Mammary epithelial cell (primary cell): ENCODE measurements at regions of chr13 and their contacts with region 1.

Region 1: GRCh38 chr13:81058916-81059290 is 718.0 kb upstream of the SPRY2 start:
- DNase-seq: peak; percentile 66
- H3K4me3 ChIP-seq: no peak overlapping the region
- H3K27ac ChIP-seq: peak overlapping the region; percentile 70
- H3K4me1 ChIP-seq: peaks cover 26% of the 10 kb centered on the region
- H3K27me3 ChIP-seq: no peaks in the 10 kb centered on the region
- CTCF ChIP-seq: no peak

Region 2: GRCh38 chr13:81480634-81481033 is 421.7 kb after region 1 on chr13:
- CTCF ChIA-PET with region 1: no interaction called
- dilution Hi-C with region 1: no loop called
- in situ Hi-C with region 1: loop called in 1 of 2 experiments (anchors 25 kb)
- intact Hi-C with region 1: loop called (anchors 2 kb)
- DNase-seq: peak; percentile 0
- H3K4me3 ChIP-seq: no peak overlapping the region
- H3K27ac ChIP-seq: no peak overlapping the region
- H3K4me1 ChIP-seq: no peaks in the 10 kb centered on the region
- H3K27me3 ChIP-seq: no peaks in the 10 kb centered on the region
- CTCF ChIP-seq: peak; percentile 28 to 56

Region 3: DNA sequence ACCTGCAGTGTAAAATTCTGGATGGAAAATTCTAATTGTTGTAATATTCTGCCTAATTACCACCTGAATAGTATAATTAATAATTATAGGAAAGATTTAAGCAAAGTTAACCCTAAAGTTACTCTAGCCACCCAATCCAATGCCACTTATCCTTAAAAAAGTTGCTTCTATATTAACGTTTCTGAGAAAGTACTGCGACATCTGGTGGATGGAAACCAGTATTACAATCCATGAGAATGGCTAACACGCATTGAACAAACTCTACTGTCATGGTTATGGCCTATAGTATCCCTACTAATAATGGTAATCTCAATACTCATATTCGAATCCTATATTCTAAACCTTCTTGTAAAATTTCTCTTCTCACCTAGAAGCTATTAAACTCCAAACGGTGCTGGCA is 1271.6 kb after region 1 on chr13:
- CTCF ChIA-PET with region 1: no interaction called
- dilution Hi-C with region 1: no loop called
- in situ Hi-C with region 1: no loop called
- intact Hi-C with region 1: loop called (anchors 2 kb)
- DNase-seq: peak; percentile 15
- H3K4me3 ChIP-seq: no peak overlapping the region
- H3K27ac ChIP-seq: no peak overlapping the region
- H3K4me1 ChIP-seq: no peaks in the 10 kb centered on the region
- H3K27me3 ChIP-seq: no peaks in the 10 kb centered on the region
- CTCF ChIP-seq: peak; percentile 62 to 63